Activated CD4-positive, alpha-beta memory T cell treated with anti-CD3 and anti-CD28 coated beads, Interleukin-2, amount 10 ng/mL, durations not matched to agents 7 days and 5 days (primary cell): ENCODE measurements at regions of chr17 and their contacts with region 1.

Region 1: DNA sequence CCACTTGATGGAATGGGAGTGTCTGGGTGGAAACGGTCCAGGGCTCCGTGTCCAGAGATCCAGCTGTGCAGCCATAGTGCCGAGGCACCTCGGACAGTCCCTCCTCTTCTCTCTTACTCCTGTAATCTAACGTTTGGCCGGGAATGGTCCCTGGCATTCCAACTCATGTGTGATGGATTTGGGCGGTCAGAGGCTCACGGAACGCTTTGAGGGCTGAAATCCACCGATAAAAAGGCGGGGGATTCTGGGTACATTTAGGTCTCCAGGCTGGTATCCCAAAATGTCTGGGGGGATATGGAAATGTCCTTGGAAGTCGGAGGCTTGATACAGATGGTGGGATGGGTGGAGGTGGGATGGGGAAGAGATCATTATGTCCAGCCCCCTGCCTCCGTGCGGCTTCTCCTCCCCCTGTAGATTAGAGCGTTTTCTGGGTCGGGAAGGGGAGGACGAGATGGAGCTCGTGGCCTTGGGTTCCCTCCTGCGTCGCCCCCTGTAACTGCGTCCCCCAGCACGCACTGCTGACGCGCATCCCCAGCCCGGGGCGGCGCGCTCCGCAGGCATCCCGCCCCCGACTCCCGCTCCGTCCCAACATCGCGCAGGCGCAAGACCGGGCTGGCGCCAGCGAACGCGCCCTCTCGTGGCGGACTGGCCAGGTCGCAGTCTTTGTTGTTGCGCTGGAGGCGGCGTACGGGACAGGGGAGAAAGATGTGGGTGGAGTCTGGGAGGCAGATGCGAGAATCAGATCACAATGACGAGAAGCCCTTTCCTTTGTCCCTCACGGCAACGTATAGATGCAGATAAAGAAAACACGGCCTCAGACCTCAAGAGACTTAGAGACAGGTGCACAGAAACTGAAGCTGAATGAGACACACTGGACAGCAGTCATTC is 4.5 kb upstream of the SGCA start:
- DNase-seq: peak; percentile 96
- H3K4me3 Mint-ChIP-seq: peak overlapping the region; percentile 70
- H3K27ac Mint-ChIP-seq: peak overlapping the region; percentile 75
- H3K4me1 Mint-ChIP-seq: peaks cover 36% of the 10 kb centered on the region
- H3K27me3 Mint-ChIP-seq: peaks cover 7% of the 10 kb centered on the region

Region 2: GRCh38 chr17:50114849-50115357 is 46.4 kb before region 1 on chr17:
- CTCF ChIA-PET with region 1: interaction called, 16 read pairs
- POLR2A ChIA-PET with region 1: interaction called, 3 read pairs
- DNase-seq: peak; percentile 56
- H3K4me3 Mint-ChIP-seq: no peak overlapping the region
- H3K27ac Mint-ChIP-seq: no peak overlapping the region
- H3K4me1 Mint-ChIP-seq: peaks cover 7% of the 10 kb centered on the region
- H3K27me3 Mint-ChIP-seq: peaks cover 39% of the 10 kb centered on the region

Region 3: DNA sequence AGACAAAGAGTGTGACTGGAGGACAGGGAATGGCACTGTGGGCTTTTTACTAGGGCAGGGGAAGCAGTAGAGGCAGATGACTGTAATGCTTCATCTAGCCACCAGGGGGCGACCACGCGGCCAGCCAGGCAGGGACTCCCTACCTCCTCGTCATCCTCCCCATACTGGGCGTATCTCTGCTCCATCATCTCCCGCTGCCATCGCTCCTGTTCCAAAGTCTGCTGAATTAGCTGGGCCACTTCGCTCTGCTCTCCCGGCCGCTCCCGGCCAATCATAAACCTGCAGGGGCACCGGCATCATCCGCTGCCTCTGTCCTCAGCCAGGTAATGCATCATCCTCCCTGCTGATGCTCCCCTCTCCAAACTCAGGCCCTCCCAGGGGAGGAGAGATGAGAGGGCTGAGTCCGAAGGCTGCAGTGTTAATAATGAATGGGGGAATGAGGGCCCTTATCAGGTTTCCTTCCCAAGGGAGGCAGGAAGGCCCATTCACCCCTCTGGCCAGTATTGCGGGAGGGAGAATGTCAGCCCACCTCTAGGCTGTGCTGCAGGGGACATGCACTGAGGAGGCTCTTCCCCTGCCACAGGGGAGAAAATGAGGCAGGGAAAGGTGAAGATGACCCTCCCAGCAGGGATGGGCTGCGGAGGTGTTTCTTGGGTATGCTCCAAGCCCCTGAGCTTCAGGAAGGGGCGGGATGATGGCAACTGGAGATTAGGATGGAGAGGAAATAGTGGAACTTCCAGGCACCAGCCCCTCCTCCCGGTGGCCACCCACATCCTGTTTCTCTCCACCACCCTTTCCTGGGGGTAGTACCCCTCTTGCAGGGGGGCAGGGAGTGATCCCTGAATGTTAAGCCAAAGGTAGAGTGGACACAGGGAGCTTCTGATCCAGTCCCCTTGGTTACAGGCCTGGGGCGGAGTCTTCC is 21.1 kb before region 1 on chr17:
- CTCF ChIA-PET with region 1: interaction called, 27 read pairs
- POLR2A ChIA-PET with region 1: interaction called, 4 read pairs
- DNase-seq: peak; percentile 86
- H3K4me3 Mint-ChIP-seq: peak overlapping the region; percentile 69
- H3K27ac Mint-ChIP-seq: peak overlapping the region; percentile 95
- H3K4me1 Mint-ChIP-seq: peaks cover 71% of the 10 kb centered on the region
- H3K27me3 Mint-ChIP-seq: no peaks in the 10 kb centered on the region

Region 4: GRCh38 chr17:50177983-50178834 is 16.9 kb after region 1 on chr17:
- CTCF ChIA-PET with region 1: interaction called, 12 read pairs
- POLR2A ChIA-PET with region 1: no interaction called
- DNase-seq: peak; percentile 52
- H3K4me3 Mint-ChIP-seq: no peak overlapping the region
- H3K27ac Mint-ChIP-seq: no peak overlapping the region
- H3K4me1 Mint-ChIP-seq: peaks cover 18% of the 10 kb centered on the region
- H3K27me3 Mint-ChIP-seq: peaks cover 16% of the 10 kb centered on the region

Region 5: DNA sequence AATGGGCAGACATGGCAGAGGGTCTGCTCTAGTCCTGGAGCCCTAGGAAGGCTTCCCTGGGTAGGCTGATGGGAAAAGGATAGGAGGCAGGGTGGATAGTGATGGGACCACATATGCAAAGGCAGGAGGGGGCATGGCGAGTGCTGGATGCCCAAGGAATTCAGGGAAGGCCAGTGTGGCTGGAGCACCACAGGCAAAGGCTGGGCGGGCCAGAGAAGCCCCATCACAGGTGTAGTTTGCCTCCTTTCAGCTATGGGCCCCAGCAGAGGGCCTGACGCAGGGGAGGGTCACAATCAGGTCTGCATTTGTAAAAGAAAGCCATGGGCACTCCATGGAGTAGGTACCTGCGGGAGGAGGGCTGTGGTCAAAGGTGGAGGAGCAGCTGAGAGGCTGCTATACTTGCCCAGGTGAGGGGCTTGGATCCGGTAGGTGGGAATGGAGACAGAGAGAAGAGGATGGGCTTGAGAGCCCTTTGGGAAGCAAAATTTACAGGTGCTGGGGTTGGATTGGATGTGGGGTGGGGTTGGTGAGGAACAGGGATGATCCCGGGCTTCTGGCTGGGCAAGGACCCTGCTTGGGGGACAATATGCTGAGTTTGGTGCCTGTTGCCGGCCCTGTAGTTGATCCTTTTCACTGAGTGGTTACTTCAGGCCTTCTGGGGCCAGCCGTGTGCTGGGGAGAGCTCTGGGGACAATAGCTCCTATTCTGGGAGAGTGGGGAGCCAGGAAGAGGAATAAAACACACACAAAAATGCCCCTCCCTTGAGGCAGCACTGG is 46.7 kb after region 1 on chr17:
- CTCF ChIA-PET with region 1: no interaction called
- POLR2A ChIA-PET with region 1: no interaction called
- DNase-seq: no peak
- H3K4me3 Mint-ChIP-seq: no peak overlapping the region
- H3K27ac Mint-ChIP-seq: no peak overlapping the region
- H3K4me1 Mint-ChIP-seq: peaks cover 7% of the 10 kb centered on the region
- H3K27me3 Mint-ChIP-seq: peaks cover 60% of the 10 kb centered on the region